Breast epithelium (tissue), 4 donors: ENCODE measurements at regions of chr1 and their contacts with region 1.

Region 1: DNA sequence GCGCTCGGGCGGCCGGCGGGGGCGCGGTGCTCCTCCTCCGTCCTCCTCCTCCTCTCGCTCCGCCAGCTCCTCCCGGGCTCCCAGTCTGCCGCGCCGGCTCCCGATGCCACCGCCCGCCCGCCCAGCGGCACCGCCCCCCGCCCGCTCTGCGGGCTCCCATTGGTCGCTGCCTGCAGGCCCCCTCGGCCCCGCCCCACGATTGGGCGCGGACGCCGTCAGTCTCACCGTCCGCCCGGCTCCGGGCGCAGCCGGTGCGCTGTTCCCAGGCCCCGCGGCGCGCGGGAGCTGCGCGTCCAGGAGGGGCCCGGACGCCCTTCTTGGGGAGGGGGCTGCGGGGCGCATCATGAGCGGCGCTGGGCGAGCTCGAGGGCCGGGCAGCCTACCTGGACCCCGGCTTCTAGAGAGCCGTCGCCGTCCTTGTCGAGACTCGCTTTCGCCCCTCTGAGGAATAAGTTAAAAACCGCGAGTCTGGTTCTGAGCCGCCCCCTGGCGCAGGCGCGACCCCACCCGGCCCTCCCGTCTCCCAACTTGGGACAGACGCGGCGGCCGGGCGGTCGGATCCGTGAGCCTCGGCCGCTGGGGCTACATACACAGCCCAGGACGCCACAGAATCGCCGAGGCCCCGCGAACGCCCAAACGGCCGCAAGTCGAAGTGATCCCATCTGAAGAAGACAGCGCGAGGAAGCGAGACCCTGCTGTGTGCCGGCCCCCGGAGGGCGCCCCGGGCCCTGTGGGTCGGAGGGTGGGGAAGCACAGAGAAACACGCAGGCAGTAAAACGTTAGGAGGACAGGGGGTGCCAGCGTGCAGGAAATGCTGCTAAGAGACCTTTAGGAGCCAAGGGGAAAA is at the start of gene SIPA1L2:
- DNase-seq: peak; percentile 90 to 92
- H3K4me3 ChIP-seq: peak within 1 kb of the TSS; percentile 72 to 89 (median 83)
- H3K27ac ChIP-seq: peak within 1 kb of the TSS; percentile 94 to 96
- H3K4me1 ChIP-seq: peaks cover 3 to 7% of the 10 kb centered on the region in 2 donors
- H3K27me3 ChIP-seq: no peaks in the 10 kb centered on the region
- CTCF ChIP-seq: peak; percentile 15 to 50 (median 21)
- POLR2A ChIP-seq: no peak
- total RNA-seq, gene SIPA1L2: 16.3 to 46.9 (median 35.9) TPM

Region 2: GRCh38 chr1:231170875-231171274 is 1459.4 kb before region 1 on chr1:
- intact Hi-C with region 1: no loop called
- DNase-seq: no peak
- H3K4me3 ChIP-seq: no peak overlapping the region
- H3K27ac ChIP-seq: no peak overlapping the region
- H3K4me1 ChIP-seq: no peaks in the 10 kb centered on the region
- H3K27me3 ChIP-seq: peaks cover 0 to 15% of the 10 kb centered on the region in 2 donors
- CTCF ChIP-seq: no peak
- POLR2A ChIP-seq: no peak

Region 3: DNA sequence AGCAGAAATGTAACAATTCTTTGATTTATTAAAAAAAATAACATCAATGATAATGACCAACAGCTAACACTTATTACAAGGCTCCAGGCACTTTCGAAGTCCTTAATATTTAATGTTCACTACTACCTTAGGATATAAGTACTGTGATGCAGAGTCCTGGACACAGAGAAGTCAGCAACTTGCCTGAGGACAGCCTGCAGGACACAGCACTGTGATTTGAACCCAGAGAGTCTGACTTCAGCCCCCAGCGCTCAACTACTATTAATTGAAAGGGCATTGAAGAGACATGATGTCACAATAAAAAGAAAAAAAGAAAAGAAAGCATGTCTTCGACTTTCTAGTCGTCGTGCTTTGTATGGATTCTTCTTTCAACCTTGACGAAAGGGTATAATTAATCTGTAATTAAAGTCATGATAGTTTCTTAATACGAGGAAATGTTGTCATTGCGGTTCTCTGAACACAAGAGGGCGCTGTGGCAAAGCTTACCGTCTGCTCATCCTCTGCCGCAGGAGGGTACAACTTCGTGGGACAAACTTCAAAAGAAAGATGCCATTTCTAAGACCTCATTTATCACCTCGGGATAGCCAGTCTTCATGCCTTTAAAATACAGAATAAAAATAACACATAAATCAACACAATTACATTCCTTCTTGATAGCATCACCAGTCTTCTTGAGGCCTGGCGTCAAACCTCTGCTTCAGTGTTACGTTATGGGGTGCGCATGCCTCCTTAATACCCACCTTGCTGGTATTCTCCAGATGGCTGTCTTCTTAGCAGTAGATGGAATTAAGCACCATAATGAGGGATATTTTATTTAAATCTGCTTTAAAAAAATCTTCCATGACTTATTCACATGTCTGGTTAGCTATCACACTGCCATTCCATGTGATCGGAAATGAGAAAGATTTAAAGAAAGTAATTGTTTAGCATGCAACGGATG is 763.6 kb before region 1 on chr1:
- intact Hi-C with region 1: loop called (anchors 10 kb)
- DNase-seq: peak in 1 of 2 donors; percentile 60
- H3K4me3 ChIP-seq: no peak overlapping the region
- H3K27ac ChIP-seq: no peak overlapping the region
- H3K4me1 ChIP-seq: no peaks in the 10 kb centered on the region
- H3K27me3 ChIP-seq: no peaks in the 10 kb centered on the region
- CTCF ChIP-seq: peak; percentile 65 to 85 (median 81)
- POLR2A ChIP-seq: no peak